Gastrocnemius medialis (tissue), 4 donors: ENCODE measurements at regions of chr13 and their contacts with region 1.

Region 1: DNA sequence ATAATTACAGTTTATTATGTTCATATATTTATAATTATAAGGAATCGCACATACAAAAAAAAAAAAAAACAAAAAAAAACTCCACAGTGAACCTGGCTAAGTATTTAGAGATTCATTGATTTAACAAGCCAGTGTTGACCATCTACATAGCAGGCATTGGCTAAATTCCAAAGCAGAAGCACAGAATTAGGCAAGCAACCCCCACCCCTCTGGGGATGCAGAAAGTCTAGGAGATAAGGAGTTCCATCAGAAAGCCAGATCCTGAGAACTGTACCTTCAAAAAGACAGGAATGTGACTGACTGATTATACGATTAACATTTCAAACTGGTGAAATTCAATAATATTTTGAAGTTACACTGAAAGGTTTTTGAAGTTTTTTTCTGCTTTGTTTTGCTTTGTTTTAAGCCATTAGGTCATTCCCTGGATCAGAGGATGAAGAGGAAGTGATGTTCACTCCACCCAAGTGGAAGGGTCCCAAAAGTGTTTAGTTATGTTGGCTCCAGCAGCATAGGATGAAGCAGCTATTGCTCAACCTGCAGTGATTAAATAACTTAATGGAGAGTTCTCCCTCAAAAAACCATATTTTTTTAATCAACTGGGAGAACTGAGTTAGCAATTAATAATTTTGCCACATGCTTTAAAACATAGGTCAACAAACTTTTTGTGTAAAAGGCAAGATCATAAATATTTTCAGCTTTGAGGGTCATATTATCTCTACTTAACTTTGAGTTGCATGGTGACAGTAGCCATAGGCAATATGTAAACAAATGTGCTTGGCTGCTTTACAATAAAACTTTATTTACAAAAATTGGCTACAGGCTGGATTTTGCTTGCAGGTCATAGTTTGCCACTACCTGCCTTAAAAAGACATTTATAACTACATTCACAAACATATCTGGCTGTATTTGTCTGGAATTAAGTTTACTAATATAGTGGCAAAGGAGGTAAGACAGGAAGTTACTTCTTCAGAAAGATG is 49.6 kb downstream of the DOCK9 start:
- DNase-seq: peak; percentile 22 to 40
- ATAC-seq: peak; percentile 73 to 87
- H3K4me3 ChIP-seq: no peak overlapping the region
- H3K27ac ChIP-seq: peak overlapping the region; percentile 27 to 73 (median 62)
- H3K4me1 ChIP-seq: peaks cover 13 to 23% of the 10 kb centered on the region in 2 donors
- H3K27me3 ChIP-seq: no peaks in the 10 kb centered on the region
- CTCF ChIP-seq: no peak
- POLR2A ChIP-seq: peak in 1 of 2 donors; percentile 17

Region 2: GRCh38 chr13:98972627-98973026 is 44.4 kb after region 1 on chr13:
- in situ Hi-C with region 1: loop called in 1 of 4 experiments (anchors 5 kb)
- intact Hi-C with region 1: loop called (anchors 5 kb)
- DNase-seq: no peak
- ATAC-seq: no peak
- H3K4me3 ChIP-seq: peak overlapping the region in 2 of 4 donors; percentile 2 to 18
- H3K27ac ChIP-seq: peak overlapping the region in 3 of 4 donors; percentile 57 to 77 (median 71)
- H3K4me1 ChIP-seq: peaks cover 6 to 17% of the 10 kb centered on the region in 2 donors
- H3K27me3 ChIP-seq: no peaks in the 10 kb centered on the region
- CTCF ChIP-seq: no peak
- POLR2A ChIP-seq: no peak

Region 3: GRCh38 chr13:98977568-98978265 is 49.5 kb after region 1 on chr13 and contains the start of gene DOCK9:
- in situ Hi-C with region 1: loop called in 1 of 4 experiments (anchors 5 kb)
- intact Hi-C with region 1: loop called (anchors 5 kb)
- DNase-seq: peak; percentile 23 to 35
- ATAC-seq: peak; percentile 86 to 90
- H3K4me3 ChIP-seq: peak within 1 kb of the TSS; percentile 43 to 64 (median 54)
- H3K27ac ChIP-seq: peak within 1 kb of the TSS; percentile 41 to 77 (median 66)
- H3K4me1 ChIP-seq: peaks cover 0 to 8% of the 10 kb centered on the region in 2 donors
- H3K27me3 ChIP-seq: peaks cover 0 to 4% (median 0%) of the 10 kb centered on the region in 3 donors
- CTCF ChIP-seq: no peak
- POLR2A ChIP-seq: peak; percentile 46 to 76
- total RNA-seq, gene DOCK9: 31.4 to 46.7 (median 45.6) TPM